MCF 10A (cell line): ENCODE measurements at regions of chr6 and their contacts with region 1.

Region 1: GRCh38 chr6:29964887-29965562 is 22.7 kb downstream of the HLA-A start:
- DNase-seq: peak; percentile 88
- H3K4me3 Mint-ChIP-seq: peak overlapping the region; percentile 67
- H3K27ac Mint-ChIP-seq: peak overlapping the region; percentile 73
- H3K4me1 Mint-ChIP-seq: peaks cover 35% of the 10 kb centered on the region
- H3K27me3 Mint-ChIP-seq: no peaks in the 10 kb centered on the region
- CTCF ChIP-seq: no peak

Region 2: DNA sequence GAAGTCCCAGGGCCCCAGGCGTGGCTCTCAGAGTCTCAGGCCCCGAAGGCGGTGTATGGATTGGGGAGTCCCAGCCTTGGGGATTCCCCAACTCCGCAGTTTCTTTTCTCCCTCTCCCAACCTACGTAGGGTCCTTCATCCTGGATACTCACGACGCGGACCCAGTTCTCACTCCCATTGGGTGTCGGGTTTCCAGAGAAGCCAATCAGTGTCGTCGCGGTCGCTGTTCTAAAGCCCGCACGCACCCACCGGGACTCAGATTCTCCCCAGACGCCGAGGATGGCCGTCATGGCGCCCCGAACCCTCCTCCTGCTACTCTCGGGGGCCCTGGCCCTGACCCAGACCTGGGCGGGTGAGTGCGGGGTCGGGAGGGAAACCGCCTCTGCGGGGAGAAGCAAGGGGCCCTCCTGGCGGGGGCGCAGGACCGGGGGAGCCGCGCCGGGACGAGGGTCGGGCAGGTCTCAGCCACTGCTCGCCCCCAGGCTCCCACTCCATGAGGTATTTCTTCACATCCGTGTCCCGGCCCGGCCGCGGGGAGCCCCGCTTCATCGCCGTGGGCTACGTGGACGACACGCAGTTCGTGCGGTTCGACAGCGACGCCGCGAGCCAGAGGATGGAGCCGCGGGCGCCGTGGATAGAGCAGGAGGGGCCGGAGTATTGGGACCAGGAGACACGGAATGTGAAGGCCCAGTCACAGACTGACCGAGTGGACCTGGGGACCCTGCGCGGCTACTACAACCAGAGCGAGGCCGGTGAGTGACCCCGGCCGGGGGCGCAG is 22.6 kb before region 1 on chr6 and contains the start of gene HLA-A:
- CTCF ChIA-PET with region 1: interaction called, 5 read pairs
- POLR2A ChIA-PET with region 1: interaction called, 16 read pairs
- intact Hi-C with region 1: loop called (anchors 1 kb)
- DNase-seq: peak; percentile 97
- H3K4me3 Mint-ChIP-seq: peak within 1 kb of the TSS; percentile 96
- H3K27ac Mint-ChIP-seq: peak within 1 kb of the TSS; percentile 100
- H3K4me1 Mint-ChIP-seq: peaks cover 12% of the 10 kb centered on the region
- H3K27me3 Mint-ChIP-seq: no peaks in the 10 kb centered on the region
- CTCF ChIP-seq: no peak
- total RNA-seq, gene HLA-A: 139 and 217 TPM in 2 replicates

Region 3: GRCh38 chr6:29953001-29953441 is 12.0 kb before region 1 on chr6:
- CTCF ChIA-PET with region 1: interaction called, 3 read pairs
- POLR2A ChIA-PET with region 1: interaction called, 19 read pairs
- intact Hi-C with region 1: loop called (anchors 1 kb)
- DNase-seq: peak; percentile 66
- H3K4me3 Mint-ChIP-seq: no peak overlapping the region
- H3K27ac Mint-ChIP-seq: no peak overlapping the region
- H3K4me1 Mint-ChIP-seq: peaks cover 5% of the 10 kb centered on the region
- H3K27me3 Mint-ChIP-seq: no peaks in the 10 kb centered on the region
- CTCF ChIP-seq: no peak

Region 4: DNA sequence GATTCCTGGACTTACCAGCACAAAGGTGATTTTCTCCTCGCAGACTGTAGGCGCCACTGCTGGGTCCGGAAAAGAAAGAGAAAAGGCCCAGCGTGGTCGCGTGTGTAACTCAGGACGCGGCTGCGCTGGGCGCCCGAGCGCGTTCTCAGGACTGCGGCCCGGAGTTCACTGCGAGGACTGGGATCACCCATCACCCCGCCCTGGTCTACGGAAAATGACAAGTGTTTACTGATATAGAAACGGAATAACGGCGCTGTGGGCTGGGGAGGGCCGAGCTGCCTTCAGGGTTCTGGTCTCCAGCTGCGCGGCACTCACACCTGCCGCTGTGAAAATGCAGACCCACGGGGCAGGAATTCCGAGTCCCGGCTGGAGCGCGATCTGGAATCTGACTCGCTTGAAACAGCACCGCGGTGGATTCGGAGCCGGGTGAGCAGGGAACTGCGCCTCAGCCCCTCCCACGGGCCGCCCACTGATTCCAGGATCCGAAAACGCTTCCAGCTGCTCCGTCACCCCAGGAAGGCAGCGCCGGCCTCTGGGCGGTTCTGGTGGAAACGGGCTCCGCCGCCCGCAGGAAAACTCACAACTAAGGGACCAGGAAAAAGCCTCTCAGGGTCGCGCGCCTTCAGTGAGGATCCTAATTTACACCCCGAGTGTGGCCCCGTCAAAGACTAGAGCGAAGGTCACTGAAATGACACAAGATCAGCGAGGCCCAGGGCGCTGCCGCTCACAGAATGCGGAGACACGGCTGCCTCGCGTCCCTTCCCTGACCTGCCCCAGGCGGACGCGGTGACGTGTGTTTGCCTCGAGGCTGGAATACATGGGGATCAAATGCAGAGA is 11.8 kb after region 1 on chr6:
- CTCF ChIA-PET with region 1: interaction called, 17 read pairs
- POLR2A ChIA-PET with region 1: interaction called, 28 read pairs
- intact Hi-C with region 1: no loop called
- DNase-seq: peak; percentile 74
- H3K4me3 Mint-ChIP-seq: peak overlapping the region; percentile 75
- H3K27ac Mint-ChIP-seq: peak overlapping the region; percentile 86
- H3K4me1 Mint-ChIP-seq: peaks cover 17% of the 10 kb centered on the region
- H3K27me3 Mint-ChIP-seq: no peaks in the 10 kb centered on the region
- CTCF ChIP-seq: peak; percentile 13

Region 5: DNA sequence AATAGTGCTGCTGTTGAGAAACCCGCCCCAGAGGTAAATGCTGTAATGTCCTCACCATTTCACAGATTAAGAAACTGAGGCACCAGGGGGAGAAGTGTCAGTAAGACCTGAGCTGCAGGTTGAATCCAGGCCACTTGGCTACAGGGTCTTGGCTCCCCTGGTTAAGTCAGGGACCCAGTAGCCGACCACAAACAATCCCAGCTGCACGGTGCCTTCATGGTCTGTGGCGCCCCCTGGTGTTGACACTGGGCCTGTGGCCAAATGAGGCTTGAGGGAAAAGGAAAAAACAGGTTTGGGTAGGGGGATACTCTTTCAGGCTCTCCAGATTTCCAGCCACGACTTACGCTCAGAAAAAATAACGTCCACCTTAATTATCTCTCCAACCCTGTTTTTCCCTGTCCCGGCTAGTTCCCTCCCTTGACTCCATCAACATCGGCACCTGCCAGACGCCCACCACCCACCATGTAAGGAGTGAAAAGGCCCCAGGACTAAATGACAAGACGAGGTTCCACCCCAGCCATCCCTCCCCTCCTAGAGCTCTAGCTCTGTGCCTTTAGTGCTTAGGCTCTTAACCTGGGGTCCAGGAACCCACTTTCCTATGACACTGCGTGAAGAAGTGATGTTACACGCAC is 48.4 kb after region 1 on chr6:
- CTCF ChIA-PET with region 1: interaction called, 3 read pairs
- POLR2A ChIA-PET with region 1: no interaction called
- intact Hi-C with region 1: loop called (anchors 5 kb)
- DNase-seq: peak; percentile 19
- H3K4me3 Mint-ChIP-seq: no peak overlapping the region
- H3K27ac Mint-ChIP-seq: no peak overlapping the region
- H3K4me1 Mint-ChIP-seq: no peaks in the 10 kb centered on the region
- H3K27me3 Mint-ChIP-seq: no peaks in the 10 kb centered on the region
- CTCF ChIP-seq: peak; percentile 71